ENCODE measurements at regions of chr16 and their contacts with region 1.

Region 1: GRCh38 chr16:84484579-84485254 is 19.7 kb downstream of the MEAK7 start:
- DNase-seq: peak; percentile 49
- ATAC-seq: no peak
- H3K4me3 ChIP-seq: no peak overlapping the region
- H3K27ac ChIP-seq: no peak overlapping the region
- H3K4me1 ChIP-seq: no peaks in the 10 kb centered on the region
- H3K27me3 ChIP-seq: no peaks in the 10 kb centered on the region
- CTCF ChIP-seq: peak; percentile 75

Region 2: GRCh38 chr16:84277237-84277823 is 207.4 kb before region 1 on chr16:
- CTCF ChIA-PET with region 1: no interaction called
- POLR2A ChIA-PET with region 1: no interaction called
- intact Hi-C with region 1: loop called (anchors 2 kb)
- DNase-seq: peak; percentile 68
- ATAC-seq: peak; percentile 80
- H3K4me3 ChIP-seq: no peak overlapping the region
- H3K27ac ChIP-seq: no peak overlapping the region
- H3K4me1 ChIP-seq: no peaks in the 10 kb centered on the region
- H3K27me3 ChIP-seq: no peaks in the 10 kb centered on the region
- CTCF ChIP-seq: peak; percentile 85

Region 3: GRCh38 chr16:84294531-84295142 is 190.1 kb before region 1 on chr16 and contains the start of gene WFDC1:
- CTCF ChIA-PET with region 1: no interaction called
- POLR2A ChIA-PET with region 1: no interaction called
- intact Hi-C with region 1: no loop called
- DNase-seq: no peak
- ATAC-seq: peak; percentile 24; the same call in 1 of the 2 replicates
- H3K4me3 ChIP-seq: peak within 1 kb of the TSS; percentile 32; the same call in 1 of the 2 replicates
- H3K27ac ChIP-seq: no peak within 1 kb of the TSS
- H3K4me1 ChIP-seq: no peaks in the 10 kb centered on the region; the same call in 1 of the 2 replicates
- H3K27me3 ChIP-seq: peaks cover 8% of the 10 kb centered on the region; the same call in 1 of the 2 replicates
- CTCF ChIP-seq: no peak
- total RNA-seq, gene WFDC1: 0.15 TPM in 1 of 2 replicates, not detected in the other

Measured in PC-3 (cell line).